ENCODE measurements at regions of chr5 and their contacts with region 1.

Region 1: GRCh38 chr5:154940772-154941620 is at the start of gene MRPL22:
- DNase-seq: peak; percentile 97
- H3K4me3 Mint-ChIP-seq: peak within 1 kb of the TSS; percentile 96
- H3K27ac Mint-ChIP-seq: peak within 1 kb of the TSS; percentile 97
- H3K4me1 Mint-ChIP-seq: peaks cover 23% of the 10 kb centered on the region
- H3K27me3 Mint-ChIP-seq: no peaks in the 10 kb centered on the region
- CTCF ChIP-seq: no peak
- total RNA-seq, gene MRPL22: 123 and 127 TPM in 2 replicates

Region 2: DNA sequence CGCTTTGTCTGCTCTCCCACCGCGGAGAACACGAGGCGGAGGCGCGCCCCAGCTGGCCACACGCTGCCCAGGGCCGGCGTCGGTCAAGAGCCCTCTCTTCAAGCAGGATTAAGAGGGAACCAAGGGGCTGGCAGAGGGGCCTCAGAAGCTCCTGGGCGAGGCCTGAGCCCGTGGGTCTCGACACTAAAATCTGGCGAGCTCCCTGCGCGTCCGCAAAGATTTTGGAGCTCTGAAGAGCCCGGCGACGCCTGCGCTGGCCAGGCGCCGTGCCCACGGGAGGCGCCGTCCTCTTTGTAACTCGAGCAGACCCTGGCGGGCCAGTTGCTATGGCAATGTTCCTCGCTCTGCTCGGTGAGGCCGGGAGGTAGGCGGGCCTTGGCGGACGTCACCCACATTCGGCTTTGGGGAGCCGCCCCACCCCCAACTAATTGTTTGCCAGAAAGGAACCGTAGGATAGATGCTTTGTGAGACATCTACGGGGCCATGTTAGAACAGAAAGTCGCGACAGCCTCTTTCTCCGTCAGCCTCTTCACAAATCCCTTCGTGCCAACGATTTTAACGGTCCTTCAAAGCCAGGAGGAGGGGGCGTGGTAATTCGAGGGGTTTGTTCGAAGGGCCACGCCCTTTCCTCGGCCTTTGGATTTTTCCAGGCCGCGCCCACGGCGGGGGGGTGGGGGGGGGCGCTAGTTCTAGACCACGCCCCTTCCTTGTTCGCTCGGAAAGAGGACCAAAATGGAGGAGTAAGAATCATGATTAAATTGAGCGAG is 83.3 kb before region 1 on chr5:
- CTCF ChIA-PET with region 1: no interaction called
- POLR2A ChIA-PET with region 1: interaction called, 28 read pairs
- intact Hi-C with region 1: no loop called
- DNase-seq: peak; percentile 99
- H3K4me3 Mint-ChIP-seq: peak overlapping the region; percentile 85
- H3K27ac Mint-ChIP-seq: peak overlapping the region; percentile 95
- H3K4me1 Mint-ChIP-seq: peaks cover 36% of the 10 kb centered on the region
- H3K27me3 Mint-ChIP-seq: no peaks in the 10 kb centered on the region
- CTCF ChIP-seq: no peak

Region 3: GRCh38 chr5:154962494-154962893 is 21.5 kb after region 1 on chr5:
- CTCF ChIA-PET with region 1: interaction called, 15 read pairs
- POLR2A ChIA-PET with region 1: interaction called, 6 read pairs
- intact Hi-C with region 1: no loop called
- DNase-seq: peak; percentile 32
- H3K4me3 Mint-ChIP-seq: no peak overlapping the region
- H3K27ac Mint-ChIP-seq: no peak overlapping the region
- H3K4me1 Mint-ChIP-seq: no peaks in the 10 kb centered on the region
- H3K27me3 Mint-ChIP-seq: no peaks in the 10 kb centered on the region
- CTCF ChIP-seq: no peak

Region 4: GRCh38 chr5:155004138-155004744 is 63.2 kb after region 1 on chr5:
- CTCF ChIA-PET with region 1: interaction called, 7 read pairs
- POLR2A ChIA-PET with region 1: no interaction called
- intact Hi-C with region 1: loop called (anchors 1 kb)
- DNase-seq: peak; percentile 61
- H3K4me3 Mint-ChIP-seq: no peak overlapping the region
- H3K27ac Mint-ChIP-seq: no peak overlapping the region
- H3K4me1 Mint-ChIP-seq: peaks cover 9% of the 10 kb centered on the region
- H3K27me3 Mint-ChIP-seq: no peaks in the 10 kb centered on the region
- CTCF ChIP-seq: peak; percentile 37

Region 5: GRCh38 chr5:155027993-155028629 is 87.1 kb after region 1 on chr5:
- CTCF ChIA-PET with region 1: interaction called, 39 read pairs
- POLR2A ChIA-PET with region 1: no interaction called
- intact Hi-C with region 1: loop called (anchors 1 kb)
- DNase-seq: peak; percentile 58
- H3K4me3 Mint-ChIP-seq: no peak overlapping the region
- H3K27ac Mint-ChIP-seq: no peak overlapping the region
- H3K4me1 Mint-ChIP-seq: no peaks in the 10 kb centered on the region
- H3K27me3 Mint-ChIP-seq: no peaks in the 10 kb centered on the region
- CTCF ChIP-seq: peak; percentile 67

Region 6: DNA sequence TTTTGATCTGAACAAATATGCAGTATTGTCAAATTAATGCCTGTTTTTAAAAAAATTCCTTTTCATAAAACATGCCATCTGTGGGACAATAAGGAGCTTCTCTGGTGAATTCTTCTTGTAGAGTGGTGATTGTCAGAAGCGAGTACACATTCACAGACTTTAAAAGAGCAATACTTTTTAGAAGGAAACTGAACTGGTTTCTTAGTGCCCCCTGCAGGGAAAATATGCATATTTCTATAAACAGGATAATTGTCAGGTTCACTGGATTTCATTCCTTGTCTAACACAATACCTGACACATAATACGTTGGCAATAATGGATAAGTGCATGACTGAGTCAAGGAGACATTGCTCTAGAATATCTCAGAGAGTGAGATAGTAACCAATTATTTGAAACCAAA is 206.2 kb after region 1 on chr5:
- CTCF ChIA-PET with region 1: interaction called, 7 read pairs
- POLR2A ChIA-PET with region 1: no interaction called
- intact Hi-C with region 1: loop called (anchors 1 kb)
- DNase-seq: peak; percentile 39
- H3K4me3 Mint-ChIP-seq: no peak overlapping the region
- H3K27ac Mint-ChIP-seq: no peak overlapping the region
- H3K4me1 Mint-ChIP-seq: no peaks in the 10 kb centered on the region
- H3K27me3 Mint-ChIP-seq: no peaks in the 10 kb centered on the region
- CTCF ChIP-seq: peak; percentile 49

Measured in MCF 10A (cell line).